CD4-positive, alpha-beta memory T cell (primary cell): ENCODE measurements at regions of chr7 and their contacts with region 1.

Region 1: GRCh38 chr7:101815835-101816493 is 1.5 kb upstream of the CUX1 start:
- DNase-seq: peak; percentile 75 to 78 (median 76)
- H3K4me3 ChIP-seq: peak overlapping the region in 1 of 2 donors; percentile 43
- H3K4me3 Mint-ChIP-seq: peak overlapping the region; percentile 77 to 89 (median 86)
- H3K27ac ChIP-seq: no peak overlapping the region
- H3K27ac Mint-ChIP-seq: peak overlapping the region; percentile 66 to 89 (median 81)
- H3K4me1 ChIP-seq: peaks cover 20% of the 10 kb centered on the region
- H3K4me1 Mint-ChIP-seq: peaks cover 21 to 35% (median 27%) of the 10 kb centered on the region in 4 donors
- H3K27me3 ChIP-seq: no peaks in the 10 kb centered on the region
- H3K27me3 Mint-ChIP-seq: peaks cover 2% of the 10 kb centered on the region in 2 donors

Region 2: GRCh38 chr7:101804967-101805366 is 11.0 kb before region 1 on chr7:
- CTCF ChIA-PET with region 1: interaction called, 7 read pairs
- POLR2A ChIA-PET with region 1: interaction called, 4 read pairs
- intact Hi-C with region 1: loop called (anchors 1 kb)
- DNase-seq: peak in 3 of 5 donors; percentile 11 to 15 (median 13)
- H3K4me3 ChIP-seq: no peak overlapping the region
- H3K4me3 Mint-ChIP-seq: peak overlapping the region in 7 of 8 donors; percentile 5 to 82 (median 65)
- H3K27ac ChIP-seq: no peak overlapping the region
- H3K27ac Mint-ChIP-seq: peak overlapping the region in 2 of 7 donors; percentile 11 to 59
- H3K4me1 ChIP-seq: peaks cover 17% of the 10 kb centered on the region
- H3K4me1 Mint-ChIP-seq: peaks cover 16 to 29% (median 23%) of the 10 kb centered on the region in 4 donors
- H3K27me3 ChIP-seq: no peaks in the 10 kb centered on the region
- H3K27me3 Mint-ChIP-seq: peaks cover 2 to 5% of the 10 kb centered on the region in 2 donors

Region 3: DNA sequence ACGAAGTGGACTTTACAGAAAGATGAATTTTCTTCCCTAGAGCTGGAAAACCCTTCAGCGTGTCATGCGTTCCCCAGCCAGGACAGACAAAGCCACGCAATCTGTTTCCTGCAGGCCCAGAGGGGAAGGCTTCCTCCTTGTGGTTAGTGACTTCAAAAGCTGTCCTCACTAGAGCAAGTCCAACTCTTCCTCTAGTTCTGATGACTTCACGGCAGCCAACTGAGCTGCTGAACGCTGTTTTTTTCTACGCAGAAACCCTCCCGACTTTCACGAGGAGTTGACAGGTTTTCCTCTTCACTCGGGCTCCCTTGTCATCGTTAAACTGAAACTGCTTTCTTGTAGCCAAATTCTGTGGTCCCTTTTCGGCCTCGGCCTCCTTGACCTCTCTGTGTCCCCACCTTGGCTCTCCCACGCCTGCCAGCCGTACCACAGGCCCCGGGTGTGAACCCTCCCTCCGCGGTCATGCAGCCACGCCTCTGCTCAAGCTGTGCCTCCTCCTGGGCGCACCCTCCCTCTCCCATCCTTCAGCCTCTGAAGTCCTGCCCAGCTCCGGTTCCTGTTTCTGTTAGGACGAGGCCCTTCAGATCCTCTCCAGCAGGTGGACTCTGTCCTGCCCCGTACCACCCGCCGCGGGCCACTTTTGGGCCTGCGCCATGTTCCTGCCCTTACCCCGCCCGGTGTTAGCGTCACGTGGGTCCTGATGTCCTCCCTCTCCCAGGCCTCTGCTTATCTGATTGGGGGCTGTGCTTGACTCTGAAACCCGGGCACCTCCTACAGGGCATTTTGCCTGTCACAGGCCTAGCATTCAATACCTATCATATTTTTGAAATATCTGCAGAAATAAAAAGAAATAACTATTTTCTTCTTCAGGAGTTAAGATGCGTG is 40.8 kb after region 1 on chr7:
- CTCF ChIA-PET with region 1: interaction called, 9 read pairs
- POLR2A ChIA-PET with region 1: interaction called, 4 read pairs
- intact Hi-C with region 1: loop called (anchors 2 kb)
- DNase-seq: peak; percentile 78 to 91 (median 80)
- H3K4me3 ChIP-seq: peak overlapping the region; percentile 44 to 61
- H3K4me3 Mint-ChIP-seq: peak overlapping the region; percentile 95 to 100 (median 97)
- H3K27ac ChIP-seq: peak overlapping the region; percentile 68
- H3K27ac Mint-ChIP-seq: peak overlapping the region; percentile 90 to 99 (median 97)
- H3K4me1 ChIP-seq: peaks cover 18% of the 10 kb centered on the region
- H3K4me1 Mint-ChIP-seq: peaks cover 22 to 47% (median 39%) of the 10 kb centered on the region in 4 donors
- H3K27me3 ChIP-seq: no peaks in the 10 kb centered on the region
- H3K27me3 Mint-ChIP-seq: no peaks in the 10 kb centered on the region